Stomach (tissue), 19 donors: ENCODE measurements at regions of chr1 and their contacts with region 1.

Region 1: DNA sequence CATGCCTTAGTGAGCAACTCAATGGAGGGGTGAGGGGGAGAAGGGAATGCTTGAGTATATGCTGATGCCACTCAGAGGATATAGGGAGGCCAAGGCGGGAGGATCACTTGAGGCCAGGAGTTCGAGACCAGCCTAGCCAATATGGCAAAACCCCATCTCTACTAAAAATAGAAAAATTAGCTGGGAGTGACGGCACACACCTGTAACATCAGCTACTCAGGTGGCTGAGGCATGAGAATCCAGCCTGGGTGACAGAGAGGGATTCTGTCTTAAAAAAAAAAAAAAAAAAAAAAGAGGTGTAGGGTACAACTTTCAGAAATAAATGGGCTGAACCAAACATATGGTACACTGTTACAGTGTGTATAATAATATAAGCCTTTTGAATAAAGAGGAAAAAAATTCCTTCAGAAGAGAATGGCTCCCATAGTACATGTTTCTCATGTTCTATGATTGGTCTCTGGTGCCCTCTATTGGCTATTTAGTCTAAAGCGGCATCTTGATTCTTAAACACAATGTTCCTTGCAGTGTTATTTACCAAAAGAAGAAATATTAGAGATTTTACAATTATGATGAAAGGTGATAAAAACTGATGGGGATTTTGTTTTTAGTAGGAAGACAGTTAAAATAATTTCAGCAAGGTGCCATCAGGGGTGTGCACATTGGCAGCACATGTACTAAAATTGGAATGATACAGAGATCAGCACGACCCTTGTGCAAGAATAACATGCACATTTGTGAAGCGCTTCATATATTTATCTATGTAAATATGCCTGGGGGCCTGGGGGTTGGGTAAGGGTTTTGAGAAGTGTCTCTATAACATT is 109.8 kb downstream of the PATJ start:
- DNase-seq: peak in 1 of 2 donors; percentile 91
- H3K4me3 ChIP-seq: no peak overlapping the region
- H3K27ac ChIP-seq: no peak overlapping the region
- H3K4me1 ChIP-seq: no peaks in the 10 kb centered on the region
- H3K27me3 ChIP-seq: no peaks in the 10 kb centered on the region
- CTCF ChIP-seq: peak in 5 of 7 experiments; percentile 30 to 61 (median 50)
- EP300 ChIP-seq: no peak
- POLR2A ChIP-seq: no peak

Region 2: GRCh38 chr1:60969971-60970509 is 882.0 kb before region 1 on chr1:
- intact Hi-C with region 1: loop called (anchors 5 kb)
- DNase-seq: peak in 1 of 2 donors; percentile 64
- H3K4me3 ChIP-seq: no peak overlapping the region
- H3K27ac ChIP-seq: peak overlapping the region in 2 of 5 donors; percentile 44 to 47
- H3K4me1 ChIP-seq: peaks cover 0 to 29% (median 11%) of the 10 kb centered on the region in 4 donors
- H3K27me3 ChIP-seq: no peaks in the 10 kb centered on the region
- CTCF ChIP-seq: peak in 5 of 7 experiments; percentile 11 to 47 (median 37)
- EP300 ChIP-seq: no peak
- POLR2A ChIP-seq: no peak

Region 3: GRCh38 chr1:61654082-61654481 is 198.0 kb before region 1 on chr1:
- intact Hi-C with region 1: no loop called
- DNase-seq: no peak
- H3K4me3 ChIP-seq: no peak overlapping the region
- H3K27ac ChIP-seq: no peak overlapping the region
- H3K4me1 ChIP-seq: no peaks in the 10 kb centered on the region
- H3K27me3 ChIP-seq: no peaks in the 10 kb centered on the region
- CTCF ChIP-seq: no peak
- EP300 ChIP-seq: no peak
- POLR2A ChIP-seq: no peak

Region 4: DNA sequence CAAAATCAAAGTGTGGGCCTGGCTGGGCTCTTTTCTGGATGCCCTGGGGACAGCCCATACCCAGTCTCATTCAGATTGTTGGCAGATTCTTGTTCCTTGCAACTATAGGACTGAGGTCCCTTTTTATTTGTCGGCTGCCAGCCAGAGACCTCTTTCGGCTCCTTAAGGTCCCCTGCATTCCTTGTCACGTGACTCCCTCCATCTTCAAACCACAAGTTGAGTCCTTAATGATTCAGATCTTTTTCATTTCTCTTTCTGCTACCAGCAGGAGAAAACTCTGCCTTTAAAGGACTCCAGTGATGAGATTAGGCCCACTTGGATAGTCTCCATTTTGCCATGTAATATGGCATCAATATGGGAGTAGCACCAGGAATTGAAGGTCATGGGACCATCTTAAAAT is 61.2 kb before region 1 on chr1:
- intact Hi-C with region 1: no loop called
- DNase-seq: no peak
- H3K4me3 ChIP-seq: no peak overlapping the region
- H3K27ac ChIP-seq: no peak overlapping the region
- H3K4me1 ChIP-seq: no peaks in the 10 kb centered on the region
- H3K27me3 ChIP-seq: no peaks in the 10 kb centered on the region
- CTCF ChIP-seq: no peak
- EP300 ChIP-seq: no peak
- POLR2A ChIP-seq: no peak

Region 5: DNA sequence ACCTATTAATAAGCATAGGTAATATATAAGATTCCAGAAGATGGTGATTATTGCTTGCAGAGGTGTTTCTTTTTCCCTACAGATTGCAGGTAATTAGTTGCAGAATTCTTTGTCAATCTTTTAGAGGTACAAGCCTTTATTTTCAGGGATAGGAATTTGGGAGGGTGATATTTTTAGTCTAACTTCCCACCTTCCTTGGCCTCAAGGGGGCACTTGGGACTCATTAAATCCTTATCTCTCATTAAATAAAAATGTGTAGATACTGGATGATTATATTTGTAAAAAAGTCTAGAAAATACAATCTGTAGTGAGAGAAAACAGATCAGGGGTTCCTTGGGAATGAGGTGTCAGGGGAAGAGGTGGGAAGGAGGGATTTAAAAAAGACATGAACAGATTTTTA is 69.4 kb after region 1 on chr1:
- intact Hi-C with region 1: no loop called
- DNase-seq: no peak
- H3K4me3 ChIP-seq: no peak overlapping the region
- H3K27ac ChIP-seq: no peak overlapping the region
- H3K4me1 ChIP-seq: peaks cover 0 to 3% (median 0%) of the 10 kb centered on the region in 4 donors
- H3K27me3 ChIP-seq: no peaks in the 10 kb centered on the region
- CTCF ChIP-seq: no peak
- EP300 ChIP-seq: no peak
- POLR2A ChIP-seq: no peak

Region 6: GRCh38 chr1:61941794-61942193 is 89.7 kb after region 1 on chr1:
- intact Hi-C with region 1: no loop called
- DNase-seq: no peak
- H3K4me3 ChIP-seq: no peak overlapping the region
- H3K27ac ChIP-seq: no peak overlapping the region
- H3K4me1 ChIP-seq: no peaks in the 10 kb centered on the region
- H3K27me3 ChIP-seq: no peaks in the 10 kb centered on the region
- CTCF ChIP-seq: no peak
- EP300 ChIP-seq: no peak
- POLR2A ChIP-seq: no peak